ENCODE measurements at regions of chr3 and their contacts with region 1.

Region 1: GRCh38 chr3:141370065-141370533 is 1.8 kb downstream of the ZBTB38 start:
- DNase-seq: peak; percentile 70
- H3K4me3 Mint-ChIP-seq: no peak overlapping the region
- H3K27ac Mint-ChIP-seq: no peak overlapping the region
- H3K4me1 Mint-ChIP-seq: peaks cover 21% of the 10 kb centered on the region
- H3K27me3 Mint-ChIP-seq: no peaks in the 10 kb centered on the region

Region 2: GRCh38 chr3:141402476-141403171 is 32.5 kb after region 1 on chr3:
- CTCF ChIA-PET with region 1: interaction called, 5 read pairs
- intact Hi-C with region 1: loop called (anchors 1 kb)
- DNase-seq: peak; percentile 45
- H3K4me3 Mint-ChIP-seq: peak overlapping the region; percentile 86
- H3K27ac Mint-ChIP-seq: peak overlapping the region; percentile 84
- H3K4me1 Mint-ChIP-seq: peaks cover 48% of the 10 kb centered on the region
- H3K27me3 Mint-ChIP-seq: no peaks in the 10 kb centered on the region

Measured in activated naive CD4-positive, alpha-beta T cell treated with anti-CD3 and anti-CD28 coated beads for 36 hours (primary cell).